Naive thymus-derived CD4-positive, alpha-beta T cell (primary cell): ENCODE measurements at regions of chr1 and their contacts with region 1.

Region 1: GRCh38 chr1:244112636-244113035 is 61.6 kb downstream of the ZBTB18 start:
- DNase-seq: no peak
- ATAC-seq: no peak
- H3K4me3 ChIP-seq: no peak overlapping the region
- H3K4me3 Mint-ChIP-seq: no peak overlapping the region
- H3K27ac ChIP-seq: no peak overlapping the region
- H3K27ac Mint-ChIP-seq: no peak overlapping the region
- H3K4me1 ChIP-seq: no peaks in the 10 kb centered on the region
- H3K4me1 Mint-ChIP-seq: no peaks in the 10 kb centered on the region
- H3K27me3 ChIP-seq: no peaks in the 10 kb centered on the region
- H3K27me3 Mint-ChIP-seq: peaks cover under 1 to 8% (median 5%) of the 10 kb centered on the region in 5 donors

Region 2: GRCh38 chr1:243831463-243831862 is 281.2 kb before region 1 on chr1:
- CTCF ChIA-PET with region 1: no interaction called
- POLR2A ChIA-PET with region 1: no interaction called
- intact Hi-C with region 1: no loop called
- DNase-seq: no peak
- ATAC-seq: no peak
- H3K4me3 ChIP-seq: no peak overlapping the region
- H3K4me3 Mint-ChIP-seq: peak overlapping the region in 2 of 10 donors; percentile 0 to 12
- H3K27ac ChIP-seq: no peak overlapping the region
- H3K27ac Mint-ChIP-seq: peak overlapping the region in 5 of 9 donors; percentile 2 to 56 (median 6)
- H3K4me1 ChIP-seq: peaks cover 5 to 8% of the 10 kb centered on the region in 2 donors
- H3K4me1 Mint-ChIP-seq: peaks cover 9 to 71% (median 50%) of the 10 kb centered on the region in 7 donors
- H3K27me3 ChIP-seq: no peaks in the 10 kb centered on the region
- H3K27me3 Mint-ChIP-seq: no peaks in the 10 kb centered on the region

Region 3: DNA sequence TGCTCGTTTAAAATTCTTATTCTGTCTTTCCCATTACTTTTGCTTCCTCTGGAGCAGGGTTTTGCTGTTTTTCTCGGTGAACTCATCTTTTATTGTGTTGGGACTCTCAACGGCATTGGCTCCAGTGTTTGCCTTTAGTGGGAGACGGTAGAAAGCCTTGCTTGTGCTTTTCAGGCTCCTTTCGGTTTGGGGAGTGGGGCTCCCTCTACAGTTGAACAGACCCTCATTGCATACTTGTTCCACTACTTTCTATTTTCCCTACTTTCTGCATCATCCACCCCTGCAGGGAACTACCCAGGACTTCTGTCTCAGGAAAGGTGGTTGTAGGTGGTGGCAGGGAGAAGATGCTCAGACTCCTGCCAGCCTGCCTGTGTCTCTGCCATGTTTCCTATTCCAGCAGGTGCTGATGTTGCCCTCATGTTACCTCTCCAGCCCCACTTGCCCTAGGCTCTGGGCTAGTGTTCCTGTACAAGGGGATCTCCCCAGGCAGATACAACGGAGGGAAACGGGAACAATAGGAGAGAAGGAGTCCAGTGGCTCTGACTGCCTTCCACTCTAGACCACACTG is 130.1 kb before region 1 on chr1:
- CTCF ChIA-PET with region 1: no interaction called
- POLR2A ChIA-PET with region 1: no interaction called
- intact Hi-C with region 1: loop called in 1 of 2 experiments (anchors 10 kb)
- DNase-seq: no peak
- ATAC-seq: no peak
- H3K4me3 ChIP-seq: no peak overlapping the region
- H3K4me3 Mint-ChIP-seq: no peak overlapping the region
- H3K27ac ChIP-seq: no peak overlapping the region
- H3K27ac Mint-ChIP-seq: no peak overlapping the region
- H3K4me1 ChIP-seq: no peaks in the 10 kb centered on the region
- H3K4me1 Mint-ChIP-seq: no peaks in the 10 kb centered on the region
- H3K27me3 ChIP-seq: no peaks in the 10 kb centered on the region
- H3K27me3 Mint-ChIP-seq: no peaks in the 10 kb centered on the region

Region 4: DNA sequence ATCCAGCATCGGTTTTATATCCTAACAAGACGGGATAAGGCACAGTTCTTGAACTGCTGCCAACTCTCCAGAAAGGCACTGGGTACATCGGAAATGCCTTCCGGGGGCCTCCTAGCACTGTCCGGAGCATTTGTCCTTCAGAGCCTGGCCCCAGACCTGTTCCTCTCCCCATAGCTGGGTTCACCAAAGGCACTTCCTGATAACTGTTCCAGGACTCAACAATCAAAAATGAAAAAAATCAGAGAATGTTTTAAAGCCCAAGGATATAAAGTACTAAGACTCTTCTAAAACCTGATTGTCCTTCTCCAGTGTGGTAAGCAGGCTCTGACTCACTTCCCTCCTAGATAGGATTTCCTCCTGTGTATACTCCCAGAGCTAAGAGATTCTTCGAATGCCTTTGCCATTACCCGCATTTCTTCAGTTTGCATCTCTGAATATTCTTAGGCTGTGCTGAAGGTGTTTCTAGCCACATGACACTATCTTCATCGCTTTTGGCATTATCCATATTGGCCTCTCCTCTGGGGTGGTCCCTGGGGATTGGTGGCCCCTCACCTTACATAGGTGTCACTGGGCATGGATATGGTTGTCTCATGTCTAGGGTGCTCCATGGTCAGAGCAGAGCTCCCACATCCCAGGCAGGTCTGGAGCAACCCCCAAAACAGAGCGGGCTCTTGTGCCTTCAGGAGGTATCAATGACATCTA is 51.4 kb after region 1 on chr1:
- CTCF ChIA-PET with region 1: no interaction called
- POLR2A ChIA-PET with region 1: no interaction called
- intact Hi-C with region 1: no loop called
- DNase-seq: no peak
- ATAC-seq: no peak
- H3K4me3 ChIP-seq: no peak overlapping the region
- H3K4me3 Mint-ChIP-seq: no peak overlapping the region
- H3K27ac ChIP-seq: no peak overlapping the region
- H3K27ac Mint-ChIP-seq: no peak overlapping the region
- H3K4me1 ChIP-seq: no peaks in the 10 kb centered on the region
- H3K4me1 Mint-ChIP-seq: no peaks in the 10 kb centered on the region
- H3K27me3 ChIP-seq: no peaks in the 10 kb centered on the region
- H3K27me3 Mint-ChIP-seq: no peaks in the 10 kb centered on the region